Posterior cingulate gyrus (tissue), 11 donors: ENCODE measurements at regions of chr9 and their contacts with region 1.

Region 1: DNA sequence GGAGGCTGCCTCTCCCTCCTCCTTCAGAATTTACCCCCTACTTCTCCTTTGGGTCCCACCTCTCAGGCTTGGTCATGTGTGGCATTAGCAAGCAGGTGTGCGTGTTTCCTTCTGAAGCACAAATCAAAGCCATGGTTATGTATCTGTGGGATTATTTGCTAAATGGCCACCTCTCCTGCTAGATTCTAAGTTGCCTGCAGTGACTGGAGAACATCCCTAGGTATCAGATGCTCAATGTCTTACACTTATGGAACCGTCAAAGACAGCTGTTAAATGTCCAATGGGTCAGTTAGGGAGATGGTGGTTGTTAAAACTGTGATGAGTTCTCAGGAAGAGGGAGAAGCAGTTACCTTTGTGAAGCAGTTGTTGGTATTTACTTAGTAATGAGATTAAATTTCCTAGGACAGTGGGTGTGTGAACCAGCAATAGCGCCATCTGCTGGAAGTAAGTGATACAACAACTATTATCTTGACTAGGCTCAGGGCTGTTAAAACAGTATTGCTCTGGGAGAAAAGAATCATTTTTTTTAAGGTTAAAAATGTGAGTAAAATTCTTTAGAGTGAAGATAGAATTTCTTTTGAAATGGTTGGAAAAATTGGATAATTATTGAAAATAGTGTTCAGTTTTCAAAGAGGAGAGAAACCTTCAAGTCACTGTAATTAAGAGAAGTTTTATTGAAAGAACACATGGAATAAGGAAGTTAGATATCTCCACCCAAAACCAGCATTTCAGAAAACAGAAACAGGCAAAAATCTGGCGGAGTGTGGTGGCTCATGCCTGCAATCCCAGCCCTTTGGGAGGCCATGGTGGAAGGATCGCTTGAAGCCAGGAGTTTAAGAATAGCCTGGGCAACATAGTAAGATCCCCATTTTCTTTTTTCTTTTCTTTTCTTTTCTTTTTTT is 71.3 kb downstream of the TMC1 start:
- DNase-seq: peak in 1 of 10 donors; percentile 23

Region 2: GRCh38 chr9:72292256-72292682 is 300.5 kb before region 1 on chr9:
- intact Hi-C with region 1: loop called (anchors 1 kb)
- DNase-seq: no peak

Region 3: GRCh38 chr9:72364679-72365524 is 227.9 kb before region 1 on chr9 and contains the start of gene ZFAND5:
- intact Hi-C with region 1: loop called (anchors 5 kb)
- DNase-seq: peak; percentile 94 to 100 (median 98)

Region 4: DNA sequence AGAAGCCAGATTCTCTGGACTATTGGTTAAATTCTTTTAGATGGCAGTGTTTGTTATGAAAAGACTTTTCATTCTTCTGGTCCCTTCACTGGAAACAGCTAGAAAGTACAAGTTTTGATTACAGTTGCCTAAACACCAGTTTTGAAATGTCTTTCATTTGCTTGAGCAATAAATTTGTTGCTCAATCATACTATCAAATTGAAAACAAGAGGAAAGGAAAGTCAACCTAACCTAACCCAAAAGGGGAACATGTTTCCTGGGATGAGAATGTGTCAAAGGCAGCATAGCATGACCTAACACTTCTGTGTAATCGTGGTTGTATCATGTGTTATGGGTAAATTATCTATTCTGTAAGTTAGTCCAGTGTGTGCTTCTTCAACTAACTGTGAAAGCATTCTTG is 141.9 kb after region 1 on chr9:
- intact Hi-C with region 1: loop called (anchors 10 kb)
- DNase-seq: no peak

Region 5: DNA sequence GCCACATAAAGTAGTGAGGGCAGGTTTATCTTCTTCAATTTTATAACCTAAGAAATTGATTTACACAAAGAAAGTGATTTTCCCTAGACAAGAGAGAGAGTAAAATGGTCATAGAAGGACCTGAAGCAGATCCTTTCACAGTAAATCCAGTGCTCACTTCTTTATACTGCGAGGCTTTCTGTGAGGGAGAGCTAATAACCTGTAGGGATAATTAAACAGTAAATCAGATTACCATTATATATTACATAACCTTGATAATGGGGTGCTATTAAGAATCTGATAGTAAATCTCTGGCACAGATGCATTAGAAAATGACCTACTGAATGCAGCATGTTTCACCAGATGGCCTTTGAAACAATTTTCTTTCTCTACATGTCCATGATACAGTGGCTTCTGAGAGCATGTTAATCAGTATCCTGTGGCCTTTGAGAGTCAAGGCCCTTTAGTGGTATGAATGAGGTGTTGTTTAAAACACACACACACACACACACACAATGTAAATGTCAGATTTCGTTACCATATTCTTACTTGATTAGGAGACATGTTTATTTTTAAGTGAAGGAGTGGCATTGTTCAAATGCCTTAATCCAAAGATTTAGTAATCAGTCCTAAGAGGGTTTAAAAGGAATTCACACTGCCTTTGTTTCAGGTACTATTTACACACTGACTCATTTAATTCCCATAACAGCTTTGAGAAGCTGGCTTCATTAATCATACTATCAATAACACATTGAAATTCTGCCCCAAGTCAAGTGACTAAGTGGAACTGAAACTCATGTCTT is 235.4 kb after region 1 on chr9:
- intact Hi-C with region 1: loop called (anchors 5 kb)
- DNase-seq: no peak